Activated B cell treated with CpG ODN at 0.5 μM for 24 hours (primary cell): ENCODE measurements at regions of chr11 and their contacts with region 1.

Region 1: GRCh38 chr11:121482231-121483129 is 29.7 kb upstream of the SORL1-AS1 start:
- DNase-seq: peak; percentile 33
- ATAC-seq: peak; percentile 90
- H3K4me3 Mint-ChIP-seq: peak overlapping the region; percentile 67
- H3K27ac Mint-ChIP-seq: peak overlapping the region; percentile 85
- H3K4me1 Mint-ChIP-seq: peaks cover 62% of the 10 kb centered on the region
- H3K27me3 Mint-ChIP-seq: no peaks in the 10 kb centered on the region
- CTCF ChIP-seq: no peak

Region 2: DNA sequence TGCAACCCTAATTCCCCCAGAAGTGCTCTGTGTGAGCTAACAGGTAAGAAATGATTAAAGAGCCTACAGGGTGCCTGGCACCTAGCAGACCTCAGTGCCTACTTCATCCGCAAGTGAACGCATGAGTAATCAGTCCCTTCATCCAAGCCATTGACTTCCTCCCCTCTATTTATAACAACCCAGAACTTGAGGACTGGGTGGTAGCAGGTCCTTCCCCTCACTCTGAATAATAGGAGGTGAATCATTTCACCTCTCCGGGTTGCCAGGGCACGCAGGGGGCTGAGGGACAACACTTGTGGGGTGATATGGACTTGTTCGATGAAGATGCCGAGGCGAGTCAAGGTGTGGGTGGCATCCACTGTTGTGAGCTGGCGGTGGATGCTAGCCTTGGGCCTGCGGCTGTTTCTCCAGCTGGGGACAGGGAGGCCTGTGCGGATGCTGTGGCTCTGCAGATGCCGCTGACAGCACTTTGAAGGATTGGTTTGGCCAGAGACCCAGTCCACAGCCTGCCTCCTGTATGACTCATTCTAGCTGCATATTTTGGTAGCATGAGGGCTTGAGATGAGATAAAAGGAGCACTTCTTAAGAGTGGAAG is 18.0 kb before region 1 on chr11:
- CTCF ChIA-PET with region 1: interaction called, 3 read pairs
- POLR2A ChIA-PET with region 1: interaction called, 15 read pairs
- intact Hi-C with region 1: loop called (anchors 1 kb)
- DNase-seq: no peak
- ATAC-seq: peak; percentile 51
- H3K4me3 Mint-ChIP-seq: peak overlapping the region; percentile 61
- H3K27ac Mint-ChIP-seq: peak overlapping the region; percentile 89
- H3K4me1 Mint-ChIP-seq: peaks cover 97% of the 10 kb centered on the region
- H3K27me3 Mint-ChIP-seq: no peaks in the 10 kb centered on the region
- CTCF ChIP-seq: no peak

Region 3: DNA sequence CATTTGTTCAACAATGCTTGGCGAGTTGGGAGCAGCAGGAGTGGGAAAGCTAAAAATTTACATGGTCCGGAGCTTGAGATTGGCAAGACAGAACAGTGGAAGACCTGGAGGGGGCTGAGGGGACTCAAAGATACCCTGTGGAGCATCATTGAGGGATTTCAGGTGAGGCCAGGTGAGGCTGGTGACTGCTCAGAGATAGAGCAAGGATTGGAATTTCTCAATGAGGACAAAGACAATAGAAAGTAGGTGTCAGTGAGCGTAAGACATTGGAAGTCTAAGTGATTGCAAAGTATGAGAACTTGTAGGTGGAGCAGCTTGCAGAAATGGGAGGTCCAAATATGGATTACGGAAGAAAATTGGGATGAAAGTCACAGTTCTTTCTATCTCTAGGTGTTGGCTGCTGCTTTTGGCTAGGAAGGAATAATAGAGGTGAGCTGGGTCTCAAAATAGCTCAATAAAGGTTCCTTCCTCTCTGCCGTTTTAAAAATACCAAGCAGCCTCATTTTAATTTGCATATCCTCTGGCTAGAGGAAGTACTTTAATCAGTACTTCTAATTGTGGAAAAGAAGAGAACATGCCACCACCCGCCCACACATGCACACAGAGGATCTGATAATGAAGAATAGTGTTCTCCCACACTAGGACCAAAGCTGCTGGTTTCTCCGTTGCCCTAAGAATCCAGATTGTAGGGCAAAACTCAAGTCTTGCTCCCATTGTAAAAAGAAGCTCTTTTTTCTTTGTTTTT is 12.0 kb after region 1 on chr11:
- CTCF ChIA-PET with region 1: interaction called, 3 read pairs
- POLR2A ChIA-PET with region 1: interaction called, 12 read pairs
- intact Hi-C with region 1: loop called (anchors 1 kb)
- DNase-seq: no peak
- ATAC-seq: peak; percentile 80
- H3K4me3 Mint-ChIP-seq: peak overlapping the region; percentile 69
- H3K27ac Mint-ChIP-seq: peak overlapping the region; percentile 74
- H3K4me1 Mint-ChIP-seq: peaks cover 71% of the 10 kb centered on the region
- H3K27me3 Mint-ChIP-seq: no peaks in the 10 kb centered on the region
- CTCF ChIP-seq: no peak

Region 4: GRCh38 chr11:121534131-121535093 is 51.9 kb after region 1 on chr11:
- CTCF ChIA-PET with region 1: no interaction called
- POLR2A ChIA-PET with region 1: no interaction called
- intact Hi-C with region 1: no loop called
- DNase-seq: no peak
- ATAC-seq: no peak
- H3K4me3 Mint-ChIP-seq: no peak overlapping the region
- H3K27ac Mint-ChIP-seq: no peak overlapping the region
- H3K4me1 Mint-ChIP-seq: peaks cover 36% of the 10 kb centered on the region
- H3K27me3 Mint-ChIP-seq: no peaks in the 10 kb centered on the region
- CTCF ChIP-seq: no peak

Region 5: DNA sequence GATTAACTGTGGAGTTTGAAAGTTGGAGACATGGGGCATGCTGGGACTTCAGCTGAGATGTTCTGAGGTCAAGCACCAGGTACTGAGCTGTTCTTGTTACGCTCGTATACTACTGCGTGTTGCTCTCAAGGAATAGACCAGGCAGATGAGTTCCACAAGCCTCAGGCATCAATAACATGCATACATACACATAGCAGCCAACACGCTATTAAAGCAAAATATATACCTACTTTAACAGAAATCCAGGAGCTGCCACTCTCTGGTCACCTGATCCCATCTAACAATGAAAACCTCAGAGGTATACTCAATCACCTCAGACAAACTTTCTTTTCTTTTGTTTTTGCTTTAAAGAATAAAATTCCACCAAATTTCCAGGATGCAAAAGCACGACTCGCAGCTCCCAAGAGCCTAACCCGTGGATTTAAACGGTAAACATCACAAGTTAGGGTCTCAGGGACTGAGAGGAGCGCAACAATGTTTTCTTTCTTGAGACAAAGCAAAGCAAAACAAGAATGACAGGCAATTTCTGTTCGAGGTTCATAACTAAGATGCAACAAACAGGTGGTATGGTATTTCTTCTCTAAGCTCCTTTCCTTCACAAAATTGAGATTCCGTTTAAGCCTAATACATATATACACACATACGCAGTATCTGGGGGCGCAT is 617.0 kb after region 1 on chr11:
- CTCF ChIA-PET with region 1: no interaction called
- POLR2A ChIA-PET with region 1: no interaction called
- intact Hi-C with region 1: no loop called
- DNase-seq: no peak
- ATAC-seq: no peak
- H3K4me3 Mint-ChIP-seq: no peak overlapping the region
- H3K27ac Mint-ChIP-seq: no peak overlapping the region
- H3K4me1 Mint-ChIP-seq: peaks cover 11% of the 10 kb centered on the region
- H3K27me3 Mint-ChIP-seq: peaks cover 29% of the 10 kb centered on the region
- CTCF ChIP-seq: no peak